ENCODE measurements at regions of chr12 and their contacts with region 1.

Region 1: GRCh38 chr12:9464408-9464807 is 143.3 kb downstream of the KLRB1 start:
- DNase-seq: no peak
- H3K4me3 ChIP-seq: no peak overlapping the region
- H3K27ac ChIP-seq: no peak overlapping the region
- H3K4me1 ChIP-seq: no peaks in the 10 kb centered on the region
- H3K27me3 ChIP-seq: no peaks in the 10 kb centered on the region
- CTCF ChIP-seq: no peak

Region 2: GRCh38 chr12:9331218-9331626 is 133.2 kb before region 1 on chr12:
- CTCF ChIA-PET with region 1: interaction called, 5 read pairs
- POLR2A ChIA-PET with region 1: no interaction called
- intact Hi-C with region 1: loop called (anchors 1 kb)
- DNase-seq: peak; percentile 68
- H3K4me3 ChIP-seq: no peak overlapping the region
- H3K27ac ChIP-seq: no peak overlapping the region
- H3K4me1 ChIP-seq: no peaks in the 10 kb centered on the region
- H3K27me3 ChIP-seq: no peaks in the 10 kb centered on the region
- CTCF ChIP-seq: peak; percentile 99

Region 3: DNA sequence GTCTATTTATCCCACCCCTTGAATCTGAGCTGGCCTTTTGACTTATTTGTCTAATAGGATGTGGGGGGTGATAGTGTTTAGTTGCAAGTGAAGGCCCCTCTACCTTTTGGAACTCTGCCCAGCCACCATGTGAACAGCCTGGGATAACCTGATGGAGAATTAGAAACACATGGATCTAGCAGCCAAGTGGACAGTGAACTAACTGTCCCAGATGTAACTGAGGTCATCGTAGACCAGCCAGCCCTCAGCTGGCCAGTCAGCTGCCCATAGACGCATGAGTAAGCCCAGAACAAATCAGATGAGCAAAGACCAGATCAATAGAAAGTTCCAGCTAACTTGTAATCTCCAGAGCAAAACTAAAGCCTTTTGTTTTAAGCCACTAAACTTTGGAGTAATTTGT is 124.3 kb after region 1 on chr12:
- CTCF ChIA-PET with region 1: interaction called, 6 read pairs
- POLR2A ChIA-PET with region 1: no interaction called
- intact Hi-C with region 1: loop called (anchors 10 kb)
- DNase-seq: no peak
- H3K4me3 ChIP-seq: no peak overlapping the region
- H3K27ac ChIP-seq: no peak overlapping the region
- H3K4me1 ChIP-seq: no peaks in the 10 kb centered on the region
- H3K27me3 ChIP-seq: no peaks in the 10 kb centered on the region
- CTCF ChIP-seq: no peak

Region 4: DNA sequence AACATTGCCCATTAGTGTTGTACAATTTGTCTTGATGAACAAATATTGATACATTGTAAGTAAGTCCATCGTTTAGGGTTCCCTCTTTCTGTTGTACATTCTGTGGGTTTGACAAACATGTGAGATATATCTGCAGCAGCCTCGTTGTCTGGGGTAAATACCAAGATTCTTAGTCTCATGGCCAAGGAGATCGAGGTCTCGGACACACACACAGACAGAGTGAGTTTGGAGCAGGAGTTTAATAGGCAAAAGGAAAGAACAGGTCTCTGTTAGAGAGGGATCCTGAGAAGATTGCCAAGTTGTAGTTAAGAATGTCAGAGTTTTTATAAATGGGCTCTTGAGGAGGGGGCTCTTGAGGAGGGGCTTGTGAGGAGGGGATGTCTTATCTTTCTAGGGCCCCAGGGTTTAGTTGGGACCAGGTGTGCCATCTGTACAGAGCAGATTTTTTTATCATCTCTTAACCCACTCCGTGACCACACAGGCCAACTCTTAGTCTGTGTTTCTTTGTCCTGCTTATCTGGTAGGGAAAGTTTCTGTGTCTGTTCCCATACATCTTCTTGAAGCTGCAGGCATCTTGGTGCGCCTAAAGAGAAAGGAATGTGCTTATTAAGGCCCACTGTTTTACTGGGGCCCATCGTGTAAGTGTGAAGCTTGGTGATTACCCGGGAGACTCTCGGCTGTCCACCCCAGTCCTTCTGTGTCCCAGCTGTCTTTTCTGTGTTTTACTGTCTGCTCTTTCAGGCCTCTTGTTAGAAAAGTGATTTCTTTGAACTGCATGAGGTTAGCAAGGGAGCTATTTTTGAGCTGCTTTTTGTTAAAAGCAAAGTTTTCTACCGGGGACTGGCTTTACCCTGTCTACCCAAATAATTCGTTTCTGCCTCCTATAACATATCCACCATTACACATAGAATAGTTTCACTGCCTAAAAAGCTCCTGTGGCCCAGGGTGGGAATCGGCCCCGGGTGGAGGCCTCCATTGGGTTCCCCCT is 182.7 kb after region 1 on chr12:
- CTCF ChIA-PET with region 1: no interaction called
- POLR2A ChIA-PET with region 1: no interaction called
- intact Hi-C with region 1: no loop called
- DNase-seq: peak; percentile 14
- H3K4me3 ChIP-seq: peak overlapping the region; percentile 45
- H3K27ac ChIP-seq: no peak overlapping the region
- H3K4me1 ChIP-seq: peaks cover 18% of the 10 kb centered on the region
- H3K27me3 ChIP-seq: peaks cover 5% of the 10 kb centered on the region
- CTCF ChIP-seq: no peak

Region 5: GRCh38 chr12:10453144-10453543 is 988.7 kb after region 1 on chr12 and contains the start of gene KLRC1:
- CTCF ChIA-PET with region 1: no interaction called
- POLR2A ChIA-PET with region 1: no interaction called
- intact Hi-C with region 1: no loop called
- DNase-seq: no peak
- H3K4me3 ChIP-seq: no peak within 1 kb of the TSS
- H3K27ac ChIP-seq: no peak within 1 kb of the TSS
- H3K4me1 ChIP-seq: no peaks in the 10 kb centered on the region
- H3K27me3 ChIP-seq: no peaks in the 10 kb centered on the region
- CTCF ChIP-seq: no peak
- total RNA-seq, gene KLRC1: not detected in 2 replicates

Measured in A673 (cell line).